Activated CD4-positive, alpha-beta T cell treated with anti-CD3 and anti-CD28 coated beads for 36 hours (primary cell): ENCODE measurements at regions of chr6 and their contacts with region 1.

Region 1: GRCh38 chr6:159134701-159135364 is 34.4 kb upstream of the FNDC1 start:
- DNase-seq: peak; percentile 85
- ATAC-seq: peak; percentile 94
- H3K4me3 Mint-ChIP-seq: no peak overlapping the region
- H3K27ac Mint-ChIP-seq: no peak overlapping the region
- H3K4me1 Mint-ChIP-seq: no peaks in the 10 kb centered on the region
- H3K27me3 Mint-ChIP-seq: peaks cover 5% of the 10 kb centered on the region

Region 2: DNA sequence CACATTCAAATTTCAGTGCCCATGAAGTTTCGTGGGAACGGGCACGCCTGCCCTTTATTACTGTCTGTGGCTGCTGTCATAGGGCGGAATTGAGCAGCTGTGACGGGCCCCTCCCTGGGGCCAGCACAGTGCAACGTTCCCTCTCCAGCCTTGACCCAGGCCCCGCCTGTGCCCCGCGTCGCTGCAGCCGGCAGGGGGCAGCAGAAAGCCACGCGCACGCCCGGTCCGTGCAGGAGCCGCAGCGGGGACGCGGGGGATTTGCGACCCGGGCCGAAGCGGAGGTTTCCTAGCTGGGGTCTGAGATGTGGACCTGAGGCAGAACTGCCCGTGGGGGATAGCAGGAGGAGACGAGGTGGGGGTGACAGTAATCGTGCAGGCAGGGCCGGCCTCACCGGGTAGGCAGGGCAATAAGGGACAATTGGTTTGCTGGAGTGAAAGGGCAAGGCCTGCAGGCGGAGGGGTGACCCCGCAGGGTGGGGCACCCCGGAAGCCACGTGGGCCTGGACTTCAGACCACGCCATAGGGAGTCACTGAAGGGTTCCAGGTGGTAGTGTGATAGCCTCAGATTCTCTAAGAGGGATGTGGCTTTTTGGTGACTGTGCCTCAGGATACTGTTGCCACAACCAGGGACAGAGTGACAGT is 430.5 kb before region 1 on chr6:
- CTCF ChIA-PET with region 1: interaction called, 3 read pairs
- POLR2A ChIA-PET with region 1: no interaction called
- intact Hi-C with region 1: loop called in 1 of 2 experiments (anchors 10 kb)
- DNase-seq: peak; percentile 87
- ATAC-seq: peak; percentile 93
- H3K4me3 Mint-ChIP-seq: peak overlapping the region; percentile 45
- H3K27ac Mint-ChIP-seq: no peak overlapping the region
- H3K4me1 Mint-ChIP-seq: peaks cover 13% of the 10 kb centered on the region
- H3K27me3 Mint-ChIP-seq: no peaks in the 10 kb centered on the region

Region 3: DNA sequence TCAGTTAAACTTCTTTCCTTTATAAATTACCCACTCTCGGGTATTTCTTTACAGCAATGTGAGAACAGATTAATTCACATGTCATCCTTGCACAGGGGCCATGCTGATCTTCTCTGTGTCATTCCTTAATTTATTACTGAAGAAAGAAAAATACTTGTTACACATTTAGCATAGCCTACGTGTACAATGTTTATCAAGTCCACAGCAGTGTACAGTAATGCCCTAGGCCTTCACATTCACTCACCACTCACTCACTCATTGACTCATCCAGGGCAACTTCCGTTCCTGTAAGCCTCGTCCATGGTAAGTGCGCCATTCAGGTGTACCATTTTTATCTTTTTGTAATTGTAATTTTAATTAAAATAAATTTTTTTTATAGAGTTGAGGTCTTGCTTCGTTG is 208.4 kb before region 1 on chr6:
- CTCF ChIA-PET with region 1: no interaction called
- POLR2A ChIA-PET with region 1: no interaction called
- intact Hi-C with region 1: no loop called
- DNase-seq: no peak
- ATAC-seq: no peak
- H3K4me3 Mint-ChIP-seq: no peak overlapping the region
- H3K27ac Mint-ChIP-seq: no peak overlapping the region
- H3K4me1 Mint-ChIP-seq: no peaks in the 10 kb centered on the region
- H3K27me3 Mint-ChIP-seq: no peaks in the 10 kb centered on the region

Region 4: GRCh38 chr6:158972241-158973233 is 162.3 kb before region 1 on chr6:
- CTCF ChIA-PET with region 1: interaction called, 23 read pairs
- POLR2A ChIA-PET with region 1: no interaction called
- intact Hi-C with region 1: no loop called
- DNase-seq: no peak
- ATAC-seq: peak; percentile 51
- H3K4me3 Mint-ChIP-seq: no peak overlapping the region
- H3K27ac Mint-ChIP-seq: no peak overlapping the region
- H3K4me1 Mint-ChIP-seq: no peaks in the 10 kb centered on the region
- H3K27me3 Mint-ChIP-seq: no peaks in the 10 kb centered on the region

Region 5: DNA sequence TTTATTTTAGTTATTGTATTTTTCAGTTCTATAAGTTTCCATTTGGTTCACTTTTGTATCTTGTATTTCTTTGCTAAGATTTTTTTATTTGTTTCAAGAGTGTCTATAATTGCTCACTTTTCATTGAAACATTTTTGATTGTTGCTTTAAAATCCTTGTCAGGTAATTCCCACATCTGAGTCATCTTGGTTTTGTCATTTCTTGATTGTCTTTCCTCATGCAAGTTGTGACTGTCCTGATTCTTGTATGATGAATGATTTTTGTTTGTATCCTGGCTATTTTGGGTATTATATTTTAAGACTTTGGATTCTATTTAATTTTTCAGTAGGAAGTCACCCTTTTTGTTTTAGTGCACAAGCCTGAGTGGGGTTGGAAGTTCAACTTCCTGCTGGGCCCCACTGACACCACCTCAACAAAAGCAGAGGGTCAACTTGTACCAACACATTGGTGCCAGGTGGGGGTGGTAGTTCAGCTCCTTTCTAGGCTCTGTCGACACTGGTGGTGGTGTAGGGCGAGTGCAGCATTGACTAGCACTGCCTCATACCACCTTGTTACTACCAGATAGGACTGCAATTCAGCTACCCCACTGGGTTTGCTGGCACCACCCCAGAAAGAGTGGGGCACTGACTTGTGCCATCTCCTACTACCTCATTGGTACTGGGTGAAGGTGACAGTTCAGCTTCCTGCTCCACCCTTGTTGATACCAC is 143.7 kb before region 1 on chr6:
- CTCF ChIA-PET with region 1: interaction called, 15 read pairs
- POLR2A ChIA-PET with region 1: no interaction called
- intact Hi-C with region 1: loop called in 1 of 2 experiments (anchors 1 kb)
- DNase-seq: peak; percentile 60
- ATAC-seq: peak; percentile 60
- H3K4me3 Mint-ChIP-seq: no peak overlapping the region
- H3K27ac Mint-ChIP-seq: peak overlapping the region; percentile 20
- H3K4me1 Mint-ChIP-seq: peaks cover 43% of the 10 kb centered on the region
- H3K27me3 Mint-ChIP-seq: no peaks in the 10 kb centered on the region

Region 6: GRCh38 chr6:159008656-159009288 is 126.1 kb before region 1 on chr6:
- CTCF ChIA-PET with region 1: interaction called, 106 read pairs
- POLR2A ChIA-PET with region 1: interaction called, 3 read pairs
- intact Hi-C with region 1: loop called (anchors 1 kb)
- DNase-seq: no peak
- ATAC-seq: peak; percentile 74
- H3K4me3 Mint-ChIP-seq: peak overlapping the region; percentile 7
- H3K27ac Mint-ChIP-seq: no peak overlapping the region
- H3K4me1 Mint-ChIP-seq: peaks cover 36% of the 10 kb centered on the region
- H3K27me3 Mint-ChIP-seq: no peaks in the 10 kb centered on the region

Region 7: GRCh38 chr6:159151266-159151855 is 16.5 kb after region 1 on chr6:
- CTCF ChIA-PET with region 1: interaction called, 69 read pairs
- POLR2A ChIA-PET with region 1: no interaction called
- intact Hi-C with region 1: no loop called
- DNase-seq: peak; percentile 68
- ATAC-seq: peak; percentile 49
- H3K4me3 Mint-ChIP-seq: no peak overlapping the region
- H3K27ac Mint-ChIP-seq: no peak overlapping the region
- H3K4me1 Mint-ChIP-seq: peaks cover 4% of the 10 kb centered on the region
- H3K27me3 Mint-ChIP-seq: peaks cover 2% of the 10 kb centered on the region

Region 8: GRCh38 chr6:159463119-159463829 is 328.4 kb after region 1 on chr6:
- CTCF ChIA-PET with region 1: no interaction called
- POLR2A ChIA-PET with region 1: no interaction called
- intact Hi-C with region 1: no loop called
- DNase-seq: no peak
- ATAC-seq: no peak
- H3K4me3 Mint-ChIP-seq: no peak overlapping the region
- H3K27ac Mint-ChIP-seq: no peak overlapping the region
- H3K4me1 Mint-ChIP-seq: peaks cover 3% of the 10 kb centered on the region
- H3K27me3 Mint-ChIP-seq: peaks cover 11% of the 10 kb centered on the region

Region 9: GRCh38 chr6:159473475-159474263 is 338.8 kb after region 1 on chr6:
- CTCF ChIA-PET with region 1: no interaction called
- POLR2A ChIA-PET with region 1: no interaction called
- intact Hi-C with region 1: no loop called
- DNase-seq: no peak
- ATAC-seq: no peak
- H3K4me3 Mint-ChIP-seq: no peak overlapping the region
- H3K27ac Mint-ChIP-seq: no peak overlapping the region
- H3K4me1 Mint-ChIP-seq: no peaks in the 10 kb centered on the region
- H3K27me3 Mint-ChIP-seq: peaks cover 6% of the 10 kb centered on the region